ENCODE measurements at regions of chr1 and their contacts with region 1.

Region 1: GRCh38 chr1:211323156-211324063 is 3.2 kb upstream of the TRAF5 start:
- H3K4me3 Mint-ChIP-seq: no peak overlapping the region
- H3K27ac Mint-ChIP-seq: no peak overlapping the region
- H3K4me1 Mint-ChIP-seq: peaks cover 21% of the 10 kb centered on the region
- H3K27me3 Mint-ChIP-seq: peaks cover 12% of the 10 kb centered on the region

Region 2: GRCh38 chr1:211382714-211383480 is 59.5 kb after region 1 on chr1:
- intact Hi-C with region 1: loop called (anchors 2 kb)
- H3K4me3 Mint-ChIP-seq: peak overlapping the region; percentile 96
- H3K27ac Mint-ChIP-seq: peak overlapping the region; percentile 99
- H3K4me1 Mint-ChIP-seq: peaks cover 24% of the 10 kb centered on the region
- H3K27me3 Mint-ChIP-seq: no peaks in the 10 kb centered on the region

Region 3: GRCh38 chr1:211476200-211476849 is 152.9 kb after region 1 on chr1:
- intact Hi-C with region 1: loop called (anchors 1 kb)
- H3K4me3 Mint-ChIP-seq: no peak overlapping the region
- H3K27ac Mint-ChIP-seq: no peak overlapping the region
- H3K4me1 Mint-ChIP-seq: no peaks in the 10 kb centered on the region
- H3K27me3 Mint-ChIP-seq: peaks cover 31% of the 10 kb centered on the region

Region 4: GRCh38 chr1:211514030-211514754 is 190.8 kb after region 1 on chr1:
- intact Hi-C with region 1: loop called (anchors 2 kb)
- H3K4me3 Mint-ChIP-seq: no peak overlapping the region
- H3K27ac Mint-ChIP-seq: no peak overlapping the region
- H3K4me1 Mint-ChIP-seq: peaks cover 45% of the 10 kb centered on the region
- H3K27me3 Mint-ChIP-seq: peaks cover 28% of the 10 kb centered on the region

Region 5: DNA sequence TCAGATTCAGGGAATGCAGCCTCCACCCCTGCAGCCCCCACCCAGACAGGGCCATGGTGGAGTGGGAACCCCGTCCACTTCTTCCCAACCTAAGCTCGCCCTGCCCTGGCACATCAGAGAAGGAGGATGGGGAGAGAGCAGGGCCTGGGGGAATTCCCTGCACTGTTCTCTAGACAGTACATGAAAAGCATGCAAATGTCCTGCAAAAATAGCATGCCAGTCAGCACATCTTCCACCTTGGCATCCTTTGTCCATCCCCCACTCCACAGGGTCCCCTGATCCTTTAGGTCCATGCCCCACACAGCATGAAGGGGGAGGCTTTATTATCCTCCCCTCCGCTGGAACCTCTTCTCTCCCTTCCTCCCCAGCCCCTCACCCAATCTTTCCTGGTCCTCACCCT is 203.6 kb after region 1 on chr1:
- intact Hi-C with region 1: no loop called
- H3K4me3 Mint-ChIP-seq: no peak overlapping the region
- H3K27ac Mint-ChIP-seq: no peak overlapping the region
- H3K4me1 Mint-ChIP-seq: peaks cover 30% of the 10 kb centered on the region
- H3K27me3 Mint-ChIP-seq: no peaks in the 10 kb centered on the region